Dendritic cell treated with granulocyte-macrophage colony-stimulating factor and Interleukin-4, amounts not matched to agents 40 ng/mL and 50 ng/mL, for 4 days (primary cell): ENCODE measurements at regions of chr12 and their contacts with region 1.

Region 1: GRCh38 chr12:81992461-81992860 is 233.3 kb upstream of the PPFIA2 start:
- H3K4me3 Mint-ChIP-seq: no peak overlapping the region
- H3K27ac Mint-ChIP-seq: no peak overlapping the region
- H3K4me1 Mint-ChIP-seq: no peaks in the 10 kb centered on the region
- H3K27me3 Mint-ChIP-seq: peaks cover 7% of the 10 kb centered on the region

Region 2: GRCh38 chr12:82326905-82327503 is 334.5 kb after region 1 on chr12:
- intact Hi-C with region 1: loop called (anchors 10 kb)
- H3K4me3 Mint-ChIP-seq: no peak overlapping the region
- H3K27ac Mint-ChIP-seq: no peak overlapping the region
- H3K4me1 Mint-ChIP-seq: no peaks in the 10 kb centered on the region
- H3K27me3 Mint-ChIP-seq: no peaks in the 10 kb centered on the region